Testis (tissue), 5 donors: ENCODE measurements at regions of chr4 and their contacts with region 1.

Region 1: DNA sequence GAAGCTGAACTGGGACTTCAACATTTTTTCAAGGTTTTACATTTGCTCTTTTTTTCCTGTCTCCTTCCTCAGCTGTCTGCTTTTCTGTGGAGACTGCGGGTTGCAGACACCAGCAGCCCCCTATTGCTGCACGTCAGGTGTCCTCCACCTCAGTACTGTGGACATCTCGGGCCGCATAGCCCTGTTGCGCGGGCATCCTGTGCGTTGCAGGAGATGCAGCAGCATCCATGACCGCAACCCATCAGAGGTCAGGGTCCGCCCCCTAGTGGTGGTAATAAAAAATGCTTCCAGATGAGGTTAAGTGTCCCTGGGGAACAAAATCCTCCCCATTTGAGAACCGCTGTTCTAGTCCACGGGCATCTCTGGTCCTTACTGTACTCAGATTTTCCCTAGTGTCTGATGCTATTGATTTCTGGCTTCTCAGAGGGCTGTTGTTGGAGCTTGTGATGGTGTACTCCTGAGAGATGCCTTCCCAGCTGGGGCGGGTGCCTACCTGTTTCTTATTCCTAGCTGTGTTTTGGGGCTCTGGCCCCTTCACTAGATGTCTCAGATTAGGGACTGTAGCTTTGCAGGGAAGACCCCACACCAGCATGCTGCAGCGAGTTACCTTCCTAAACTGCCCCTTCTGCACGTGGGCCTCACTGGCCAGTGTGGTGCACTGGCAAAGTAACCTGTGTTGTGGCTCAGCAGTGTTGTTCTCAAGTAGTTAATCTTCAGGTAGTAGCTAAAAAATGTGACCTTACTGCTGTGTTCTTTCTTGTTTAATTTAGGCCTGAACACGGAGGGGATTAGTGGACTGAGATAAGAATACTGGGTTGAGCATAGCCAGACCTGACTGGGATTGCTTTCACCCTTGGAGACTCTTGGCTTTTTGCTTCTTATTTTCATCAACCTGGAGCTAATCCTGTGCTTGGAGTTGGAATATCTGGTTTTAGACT is 28.2 kb downstream of the NSD2 start:
- DNase-seq: peak; percentile 78
- H3K4me3 ChIP-seq: no peak overlapping the region
- H3K27ac ChIP-seq: no peak overlapping the region
- H3K4me1 ChIP-seq: no peaks in the 10 kb centered on the region
- H3K27me3 ChIP-seq: no peaks in the 10 kb centered on the region
- CTCF ChIP-seq: peak; percentile 84 to 94 (median 88)
- POLR2A ChIP-seq: no peak

Region 2: GRCh38 chr4:1300466-1301455 is 598.7 kb before region 1 on chr4:
- intact Hi-C with region 1: no loop called
- DNase-seq: peak; percentile 39
- H3K4me3 ChIP-seq: no peak overlapping the region
- H3K27ac ChIP-seq: peak overlapping the region in 1 of 2 donors; percentile 24
- H3K4me1 ChIP-seq: no peaks in the 10 kb centered on the region
- H3K27me3 ChIP-seq: no peaks in the 10 kb centered on the region
- CTCF ChIP-seq: no peak
- POLR2A ChIP-seq: no peak

Region 3: GRCh38 chr4:1752284-1753041 is 147.0 kb before region 1 on chr4:
- intact Hi-C with region 1: loop called (anchors 10 kb)
- DNase-seq: no peak
- H3K4me3 ChIP-seq: no peak overlapping the region
- H3K27ac ChIP-seq: no peak overlapping the region
- H3K4me1 ChIP-seq: no peaks in the 10 kb centered on the region
- H3K27me3 ChIP-seq: no peaks in the 10 kb centered on the region
- CTCF ChIP-seq: no peak
- POLR2A ChIP-seq: no peak